Spleen (tissue), 13 donors: ENCODE measurements at regions of chr19 and their contacts with region 1.

Region 1: DNA sequence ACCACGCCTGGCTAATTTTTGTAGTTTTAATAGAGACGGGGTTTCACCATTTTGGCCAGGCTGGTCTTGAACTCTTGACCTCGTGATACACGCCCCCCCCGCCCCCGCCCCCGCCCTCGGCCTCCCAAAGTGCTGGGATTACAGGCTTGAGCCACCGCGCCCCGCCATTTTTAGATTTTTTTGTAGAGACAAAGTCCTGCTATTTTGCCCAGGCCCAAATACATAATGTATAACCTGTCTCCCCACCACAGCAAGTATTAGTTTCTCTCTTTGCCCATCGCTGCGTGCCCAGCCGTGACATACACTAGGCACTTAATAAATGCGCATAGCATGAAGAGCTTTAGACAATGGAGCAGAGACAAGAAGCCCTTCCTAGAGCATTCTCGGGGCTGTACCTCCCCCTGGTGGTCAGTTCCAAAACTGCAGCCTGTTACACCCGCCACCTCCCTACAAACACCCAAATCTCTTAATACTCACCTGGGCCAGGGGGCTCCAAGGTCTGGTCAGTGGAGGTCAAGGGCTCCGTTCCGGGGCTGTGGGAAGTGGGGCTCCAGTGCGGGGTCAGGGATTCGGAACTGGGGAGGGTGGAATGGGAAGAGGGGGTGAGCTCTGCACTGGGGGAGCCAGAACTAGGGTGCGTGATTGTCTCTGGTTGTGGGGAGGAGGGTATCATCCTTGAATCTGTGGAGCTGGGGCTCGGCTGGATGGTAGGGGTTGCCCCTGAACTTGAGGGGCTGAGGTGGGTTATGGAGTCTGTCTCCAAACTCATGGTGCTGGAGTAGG is 22.5 kb downstream of the IQCN start:
- DNase-seq: peak; percentile 90
- H3K4me3 ChIP-seq: no peak overlapping the region
- H3K27ac ChIP-seq: no peak overlapping the region
- H3K4me1 ChIP-seq: peaks cover 0 to 31% (median 13%) of the 10 kb centered on the region in 6 donors
- H3K27me3 ChIP-seq: peaks cover 0 to 48% (median 4%) of the 10 kb centered on the region in 7 donors
- CTCF ChIP-seq: peak; percentile 77 to 98 (median 94)
- POLR2A ChIP-seq: no peak

Region 2: DNA sequence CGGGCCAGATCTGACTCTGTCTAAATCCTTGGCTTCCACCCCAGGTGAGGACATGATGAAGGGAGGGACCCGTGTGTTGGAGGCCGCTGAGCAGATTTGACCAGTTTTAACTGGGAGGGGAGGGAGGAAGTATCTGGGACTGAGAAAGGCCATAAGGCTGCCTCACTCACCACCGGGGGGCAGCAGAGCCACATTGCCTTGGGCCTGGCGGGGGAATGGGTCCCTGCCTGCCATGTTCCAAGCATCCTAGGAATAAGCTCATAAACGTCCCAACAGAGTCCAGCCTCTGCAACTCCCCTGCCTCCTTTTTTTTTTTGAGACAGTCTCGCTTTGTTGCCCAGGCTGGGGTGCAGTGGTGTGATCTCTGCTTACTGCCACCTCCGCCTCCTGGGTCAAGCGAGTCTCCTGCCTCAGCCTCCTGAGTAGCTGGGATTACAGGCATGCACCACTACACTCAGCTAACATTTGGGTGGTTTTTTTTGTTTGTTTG is 138.7 kb before region 1 on chr19:
- intact Hi-C with region 1: loop called (anchors 5 kb)
- DNase-seq: peak; percentile 94
- H3K4me3 ChIP-seq: peak overlapping the region in 1 of 8 donors; percentile 1
- H3K27ac ChIP-seq: peak overlapping the region in 4 of 8 donors; percentile 35 to 74 (median 48)
- H3K4me1 ChIP-seq: peaks cover 19 to 92% (median 55%) of the 10 kb centered on the region in 6 donors
- H3K27me3 ChIP-seq: peaks cover 0 to 12% (median 0%) of the 10 kb centered on the region in 7 donors
- CTCF ChIP-seq: peak; percentile 78 to 95 (median 89)
- POLR2A ChIP-seq: no peak

Region 3: GRCh38 chr19:18205200-18205892 is 46.4 kb before region 1 on chr19:
- intact Hi-C with region 1: loop called (anchors 5 kb)
- DNase-seq: peak; percentile 94
- H3K4me3 ChIP-seq: peak overlapping the region; percentile 38 to 89 (median 70)
- H3K27ac ChIP-seq: peak overlapping the region; percentile 79 to 97 (median 95)
- H3K4me1 ChIP-seq: peaks cover 12 to 62% (median 32%) of the 10 kb centered on the region in 6 donors
- H3K27me3 ChIP-seq: peaks cover 0 to 30% (median 0%) of the 10 kb centered on the region in 7 donors
- CTCF ChIP-seq: no peak
- POLR2A ChIP-seq: peak in 1 of 3 donors; percentile 31